ENCODE measurements at regions of chr14 and their contacts with region 1.

Region 1: DNA sequence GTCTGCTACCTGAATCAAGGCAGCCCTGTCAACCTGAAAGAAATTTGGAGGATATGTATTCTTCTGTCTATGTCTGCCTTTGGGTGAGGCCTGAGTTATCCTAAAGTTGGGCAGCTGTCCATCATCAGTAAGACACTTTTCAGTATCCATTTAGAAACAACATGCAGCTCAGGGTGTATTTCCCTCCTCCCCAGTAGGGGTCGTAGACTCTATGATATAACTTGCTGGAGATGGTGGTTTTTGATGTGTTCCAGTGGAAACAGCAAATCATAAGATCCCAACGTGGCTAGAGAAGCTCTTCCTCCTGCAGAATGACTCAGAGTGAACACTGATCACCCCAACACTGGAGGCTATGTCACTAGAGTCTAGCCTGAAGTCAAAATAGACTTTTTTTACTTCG is 331.5 kb upstream of the STXBP6 start:
- DNase-seq: peak; percentile 41
- ATAC-seq: peak; percentile 93
- H3K4me3 ChIP-seq: no peak overlapping the region
- H3K27ac ChIP-seq: no peak overlapping the region
- H3K4me1 ChIP-seq: no peaks in the 10 kb centered on the region
- H3K27me3 ChIP-seq: no peaks in the 10 kb centered on the region
- CTCF ChIP-seq: peak; percentile 62
- EP300 ChIP-seq: no peak
- POLR2A ChIP-seq: no peak
- RAD21 ChIP-seq: no peak

Region 2: GRCh38 chr14:25400607-25401206 is 19.2 kb after region 1 on chr14:
- CTCF ChIA-PET with region 1: no interaction called
- POLR2A ChIA-PET with region 1: no interaction called
- in situ Hi-C with region 1: no loop called
- intact Hi-C with region 1: loop called (anchors 1 kb)
- DNase-seq: peak; percentile 70
- ATAC-seq: peak; percentile 94
- H3K4me3 ChIP-seq: no peak overlapping the region
- H3K27ac ChIP-seq: no peak overlapping the region
- H3K4me1 ChIP-seq: no peaks in the 10 kb centered on the region
- H3K27me3 ChIP-seq: no peaks in the 10 kb centered on the region
- CTCF ChIP-seq: peak; percentile 87
- EP300 ChIP-seq: no peak
- POLR2A ChIP-seq: no peak
- RAD21 ChIP-seq: no peak

Region 3: DNA sequence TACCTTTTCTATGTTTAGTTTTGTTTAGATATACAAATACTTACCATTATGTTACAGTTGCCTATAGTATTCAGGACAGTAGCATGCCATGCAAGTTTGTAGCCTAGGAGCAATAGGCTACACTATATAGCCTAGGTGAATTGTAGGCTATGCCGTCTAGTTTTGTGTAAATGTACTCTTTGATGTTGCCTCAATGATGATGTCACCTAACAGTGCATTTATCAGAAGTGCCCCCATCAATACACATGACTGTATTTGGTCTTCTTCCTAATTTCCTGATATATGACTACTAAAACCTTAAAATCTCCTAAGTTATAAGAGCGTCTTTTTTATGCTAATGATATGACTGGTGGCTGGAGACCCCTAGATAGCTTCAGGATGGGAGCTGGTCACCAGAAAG is 62.9 kb after region 1 on chr14:
- CTCF ChIA-PET with region 1: no interaction called
- POLR2A ChIA-PET with region 1: no interaction called
- in situ Hi-C with region 1: no loop called
- intact Hi-C with region 1: no loop called
- DNase-seq: no peak
- ATAC-seq: no peak
- H3K4me3 ChIP-seq: no peak overlapping the region
- H3K27ac ChIP-seq: no peak overlapping the region
- H3K4me1 ChIP-seq: no peaks in the 10 kb centered on the region
- H3K27me3 ChIP-seq: no peaks in the 10 kb centered on the region
- CTCF ChIP-seq: no peak
- EP300 ChIP-seq: no peak
- POLR2A ChIP-seq: no peak
- RAD21 ChIP-seq: no peak

Region 4: DNA sequence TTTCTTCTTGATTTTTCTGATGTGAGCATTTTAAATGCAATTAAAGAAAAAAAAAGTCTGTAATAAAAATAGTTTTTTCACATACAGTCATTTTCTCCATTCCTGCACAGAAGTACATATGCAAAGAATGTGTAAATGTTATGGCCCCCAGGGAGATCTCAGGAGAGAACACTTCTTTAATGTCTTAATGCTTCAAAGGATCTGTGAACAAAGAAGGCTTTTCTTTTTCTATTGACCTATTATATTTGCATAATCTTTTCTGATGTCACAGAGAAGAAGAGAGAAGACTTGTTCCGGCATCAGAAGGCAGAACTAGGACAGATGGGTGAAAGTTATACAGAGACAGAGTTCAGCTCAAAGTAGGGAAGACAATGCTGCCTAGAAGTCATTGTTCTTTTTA is 82.0 kb after region 1 on chr14:
- CTCF ChIA-PET with region 1: no interaction called
- POLR2A ChIA-PET with region 1: no interaction called
- in situ Hi-C with region 1: no loop called
- intact Hi-C with region 1: no loop called
- DNase-seq: no peak
- ATAC-seq: no peak
- H3K4me3 ChIP-seq: no peak overlapping the region
- H3K27ac ChIP-seq: no peak overlapping the region
- H3K4me1 ChIP-seq: no peaks in the 10 kb centered on the region
- H3K27me3 ChIP-seq: no peaks in the 10 kb centered on the region
- CTCF ChIP-seq: no peak
- EP300 ChIP-seq: no peak
- POLR2A ChIP-seq: no peak
- RAD21 ChIP-seq: no peak

Measured in HepG2 (cell line).